Breast epithelium (tissue), 4 donors: ENCODE measurements at regions of chr2 and their contacts with region 1.

Region 1: DNA sequence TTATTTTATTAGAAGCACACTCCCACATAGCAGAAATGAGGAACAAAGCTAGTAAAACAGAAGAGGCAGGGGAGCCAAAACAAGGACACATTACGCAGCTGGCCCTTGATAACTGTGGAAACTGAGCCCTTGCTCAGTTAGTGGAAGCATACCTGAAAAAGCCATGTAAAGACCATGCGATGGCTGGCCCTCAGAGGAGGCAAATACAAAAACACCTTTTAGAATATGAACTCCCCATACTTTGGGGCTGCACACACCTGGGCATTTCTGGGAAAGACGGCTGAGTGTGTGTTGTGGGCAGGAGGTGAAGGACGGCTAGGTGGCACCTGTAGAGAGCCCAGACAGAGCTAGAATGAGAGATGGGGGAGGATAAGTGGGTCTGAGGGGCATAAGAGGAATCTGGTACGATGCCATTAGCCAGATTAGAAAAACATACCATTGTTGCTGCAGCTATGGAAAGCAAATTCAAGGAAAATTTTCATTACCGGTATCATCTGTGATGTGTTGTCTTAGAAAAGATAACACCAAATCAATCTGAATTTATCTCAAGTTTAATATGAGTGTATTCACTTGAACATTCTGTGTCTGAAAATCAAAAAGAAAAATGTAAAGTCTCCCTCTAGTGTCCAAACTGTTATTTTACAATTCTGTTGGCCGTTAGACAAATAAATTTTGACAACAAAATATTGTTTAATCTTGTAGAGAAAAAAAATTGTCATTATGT is 45.2 kb upstream of the SULT1C3 start:
- DNase-seq: no peak
- H3K4me3 ChIP-seq: no peak overlapping the region
- H3K27ac ChIP-seq: no peak overlapping the region
- H3K4me1 ChIP-seq: no peaks in the 10 kb centered on the region
- H3K27me3 ChIP-seq: no peaks in the 10 kb centered on the region
- CTCF ChIP-seq: no peak
- POLR2A ChIP-seq: no peak

Region 2: GRCh38 chr2:107534926-107535325 is 659.6 kb before region 1 on chr2:
- intact Hi-C with region 1: loop called (anchors 5 kb)
- DNase-seq: no peak
- H3K4me3 ChIP-seq: no peak overlapping the region
- H3K27ac ChIP-seq: no peak overlapping the region
- H3K4me1 ChIP-seq: no peaks in the 10 kb centered on the region
- H3K27me3 ChIP-seq: no peaks in the 10 kb centered on the region
- CTCF ChIP-seq: no peak
- POLR2A ChIP-seq: no peak